ENCODE measurements at regions of chr15 and their contacts with region 1.

Region 1: GRCh38 chr15:64046347-64047153 is at the start of gene DAPK2:
- DNase-seq: peak; percentile 73
- ATAC-seq: peak; percentile 90
- H3K4me3 Mint-ChIP-seq: peak within 1 kb of the TSS; percentile 64
- H3K27ac Mint-ChIP-seq: no peak within 1 kb of the TSS
- H3K4me1 Mint-ChIP-seq: peaks cover 7% of the 10 kb centered on the region
- H3K27me3 Mint-ChIP-seq: peaks cover 18% of the 10 kb centered on the region
- total RNA-seq, gene DAPK2: 1.0 to 1.3 TPM

Region 2: GRCh38 chr15:63610200-63610841 is 436.2 kb before region 1 on chr15:
- CTCF ChIA-PET with region 1: interaction called, 4 read pairs
- POLR2A ChIA-PET with region 1: interaction called, 3 read pairs
- intact Hi-C with region 1: loop called in 1 of 2 experiments (anchors 1 kb)
- DNase-seq: peak; percentile 88
- ATAC-seq: peak; percentile 79
- H3K4me3 Mint-ChIP-seq: no peak overlapping the region
- H3K27ac Mint-ChIP-seq: peak overlapping the region; percentile 88
- H3K4me1 Mint-ChIP-seq: peaks cover 39% of the 10 kb centered on the region
- H3K27me3 Mint-ChIP-seq: no peaks in the 10 kb centered on the region

Region 3: GRCh38 chr15:63826528-63826927 is 220.0 kb before region 1 on chr15:
- CTCF ChIA-PET with region 1: interaction called, 4 read pairs
- POLR2A ChIA-PET with region 1: no interaction called
- intact Hi-C with region 1: loop called (anchors 1 to 5 kb)
- DNase-seq: peak; percentile 41
- ATAC-seq: no peak
- H3K4me3 Mint-ChIP-seq: no peak overlapping the region
- H3K27ac Mint-ChIP-seq: peak overlapping the region; percentile 74
- H3K4me1 Mint-ChIP-seq: peaks cover 79% of the 10 kb centered on the region
- H3K27me3 Mint-ChIP-seq: no peaks in the 10 kb centered on the region

Region 4: DNA sequence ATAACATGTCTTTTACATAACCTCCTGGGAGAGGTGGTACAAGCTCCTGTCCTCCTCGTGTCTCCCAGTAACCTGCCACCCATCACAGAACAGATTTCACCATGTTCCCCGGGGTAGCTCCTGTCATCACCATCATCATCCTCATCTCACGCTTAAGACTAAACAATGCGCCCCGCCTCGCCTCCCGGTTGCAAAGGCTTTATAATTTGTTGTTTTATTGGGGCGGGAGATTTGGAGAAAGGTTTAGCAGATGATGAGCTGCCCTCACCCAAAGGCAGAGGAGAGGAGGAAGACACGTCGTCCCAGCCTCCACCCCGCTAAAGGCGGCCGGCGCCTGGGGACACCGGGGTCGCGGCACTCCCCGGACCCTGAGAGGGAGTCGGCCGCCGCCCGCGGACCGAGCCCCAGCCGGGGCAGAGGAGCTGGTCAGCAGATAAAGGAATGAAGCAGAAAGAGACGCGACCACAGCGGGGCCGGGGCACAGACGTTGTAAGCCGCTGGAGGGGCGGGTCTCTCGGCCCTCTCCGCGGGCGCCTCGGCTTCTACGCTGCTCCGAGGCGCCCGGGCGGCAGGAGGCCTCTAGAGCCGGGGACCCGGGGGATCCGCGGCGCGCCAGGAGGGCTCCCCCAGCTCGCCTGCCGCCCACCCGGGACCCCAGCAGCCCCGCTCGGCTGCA is 213.4 kb before region 1 on chr15:
- CTCF ChIA-PET with region 1: interaction called, 4 read pairs
- POLR2A ChIA-PET with region 1: no interaction called
- intact Hi-C with region 1: loop called in 1 of 2 experiments (anchors 5 kb)
- DNase-seq: peak; percentile 64
- ATAC-seq: peak; percentile 50
- H3K4me3 Mint-ChIP-seq: peak overlapping the region; percentile 87
- H3K27ac Mint-ChIP-seq: peak overlapping the region; percentile 91
- H3K4me1 Mint-ChIP-seq: peaks cover 50% of the 10 kb centered on the region
- H3K27me3 Mint-ChIP-seq: no peaks in the 10 kb centered on the region

Region 5: GRCh38 chr15:63945007-63945788 is 101.4 kb before region 1 on chr15:
- CTCF ChIA-PET with region 1: interaction called, 30 read pairs
- POLR2A ChIA-PET with region 1: no interaction called
- intact Hi-C with region 1: loop called (anchors 1 to 5 kb)
- DNase-seq: peak; percentile 85
- ATAC-seq: peak; percentile 97
- H3K4me3 Mint-ChIP-seq: no peak overlapping the region
- H3K27ac Mint-ChIP-seq: peak overlapping the region; percentile 51
- H3K4me1 Mint-ChIP-seq: peaks cover 4% of the 10 kb centered on the region
- H3K27me3 Mint-ChIP-seq: no peaks in the 10 kb centered on the region

Region 6: DNA sequence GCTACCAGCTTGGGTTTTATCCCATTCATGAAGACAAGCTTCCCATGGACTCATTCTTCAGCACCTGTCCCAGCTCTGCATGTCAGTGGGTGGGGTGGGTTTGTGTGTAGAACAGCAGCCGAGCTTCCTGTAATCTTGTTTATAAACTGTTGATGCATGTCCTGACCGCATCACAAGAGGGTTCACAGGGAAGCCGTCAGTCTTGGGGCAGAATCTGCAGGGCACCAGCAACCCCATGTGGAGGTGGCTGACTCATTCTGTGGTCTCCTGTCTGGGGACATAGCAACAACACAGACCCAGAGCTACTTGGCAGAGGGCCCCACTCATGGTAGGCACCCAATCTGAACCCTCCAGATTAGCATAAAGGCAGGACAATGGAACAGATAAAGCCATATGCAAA is 35.8 kb before region 1 on chr15:
- CTCF ChIA-PET with region 1: interaction called, 5 read pairs
- POLR2A ChIA-PET with region 1: no interaction called
- intact Hi-C with region 1: loop called in 1 of 2 experiments (anchors 5 kb)
- DNase-seq: peak; percentile 90
- ATAC-seq: peak; percentile 78
- H3K4me3 Mint-ChIP-seq: peak overlapping the region; percentile 31
- H3K27ac Mint-ChIP-seq: peak overlapping the region; percentile 87
- H3K4me1 Mint-ChIP-seq: peaks cover 45% of the 10 kb centered on the region
- H3K27me3 Mint-ChIP-seq: no peaks in the 10 kb centered on the region

Region 7: GRCh38 chr15:64067564-64068030 is 21.0 kb after region 1 on chr15:
- CTCF ChIA-PET with region 1: interaction called, 17 read pairs
- POLR2A ChIA-PET with region 1: no interaction called
- intact Hi-C with region 1: no loop called
- DNase-seq: peak; percentile 78
- ATAC-seq: peak; percentile 86
- H3K4me3 Mint-ChIP-seq: no peak overlapping the region
- H3K27ac Mint-ChIP-seq: no peak overlapping the region
- H3K4me1 Mint-ChIP-seq: peaks cover 6% of the 10 kb centered on the region
- H3K27me3 Mint-ChIP-seq: no peaks in the 10 kb centered on the region

Measured in activated CD4-positive, alpha-beta T cell treated with anti-CD3 and anti-CD28 coated beads for 36 hours (primary cell).